PC-3 (cell line): ENCODE measurements at regions of chr7 and their contacts with region 1.

Region 1: DNA sequence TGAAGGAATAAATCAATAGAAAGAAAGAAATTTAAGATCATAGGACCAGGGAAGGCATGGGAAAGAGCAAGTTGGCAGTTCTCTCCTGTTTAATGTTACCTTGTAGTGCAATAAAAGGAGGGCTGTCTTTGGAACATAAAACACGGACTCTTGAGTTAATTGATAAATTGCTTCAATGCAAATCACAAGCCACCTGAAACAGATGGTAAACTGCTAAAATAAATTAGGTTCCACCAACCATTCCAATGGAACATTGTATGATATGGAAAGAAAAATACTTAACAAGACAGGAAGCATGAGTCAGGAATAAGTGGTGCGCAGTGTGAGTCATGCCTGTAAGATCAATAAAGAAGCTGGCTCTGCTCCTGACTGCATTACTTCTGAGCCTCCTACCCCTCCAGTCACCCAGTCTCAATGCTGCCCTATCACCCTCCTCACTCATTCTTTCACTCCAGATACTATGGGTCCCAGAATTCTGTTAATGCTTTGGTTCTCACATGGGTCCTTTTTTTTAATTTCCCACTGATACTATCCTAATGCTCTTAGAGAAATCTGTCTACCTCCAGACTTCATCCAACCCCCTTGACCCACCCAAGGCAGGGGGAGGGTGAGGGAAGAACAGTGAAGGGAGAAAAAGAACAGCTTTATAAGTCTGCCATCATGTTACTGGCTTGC is 78.9 kb downstream of the LRRC17 start:
- DNase-seq: peak; percentile 93
- ATAC-seq: peak; percentile 96
- H3K4me3 ChIP-seq: no peak overlapping the region; the same call in 1 of the 2 replicates
- H3K27ac ChIP-seq: peak overlapping the region; percentile 86
- H3K4me1 ChIP-seq: peaks cover 40% of the 10 kb centered on the region
- H3K27me3 ChIP-seq: no peaks in the 10 kb centered on the region
- CTCF ChIP-seq: no peak

Region 2: DNA sequence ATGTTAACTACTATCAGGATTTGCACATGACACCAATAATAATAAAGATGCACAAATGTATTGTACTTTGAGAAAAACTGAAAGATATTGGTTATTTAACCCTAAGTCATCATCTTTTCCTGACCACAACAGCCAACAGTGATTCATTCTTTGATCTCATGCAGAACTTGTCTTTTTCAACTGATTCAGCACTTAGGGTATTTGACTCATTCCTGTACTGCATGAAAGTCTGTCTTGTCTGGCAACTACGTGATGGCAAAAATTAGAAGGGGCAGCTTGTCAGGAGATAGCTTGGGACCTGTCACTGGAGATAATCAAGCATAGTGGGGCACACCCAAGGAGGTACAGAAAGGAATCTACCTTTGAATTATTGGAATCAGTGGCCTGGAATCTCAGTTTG is 156.7 kb before region 1 on chr7:
- CTCF ChIA-PET with region 1: no interaction called
- POLR2A ChIA-PET with region 1: no interaction called
- intact Hi-C with region 1: loop called (anchors 1 kb)
- DNase-seq: peak; percentile 81
- ATAC-seq: peak; percentile 87
- H3K4me3 ChIP-seq: peak overlapping the region; percentile 41; the same call in 1 of the 2 replicates
- H3K27ac ChIP-seq: peak overlapping the region; percentile 58
- H3K4me1 ChIP-seq: peaks cover 34% of the 10 kb centered on the region
- H3K27me3 ChIP-seq: no peaks in the 10 kb centered on the region
- CTCF ChIP-seq: no peak

Region 3: GRCh38 chr7:103148994-103149807 is 157.5 kb after region 1 on chr7 and contains the start of gene NAPEPLD:
- CTCF ChIA-PET with region 1: no interaction called
- POLR2A ChIA-PET with region 1: no interaction called
- intact Hi-C with region 1: loop called (anchors 10 kb)
- DNase-seq: peak; percentile 83
- ATAC-seq: peak; percentile 88
- H3K4me3 ChIP-seq: peak within 1 kb of the TSS; percentile 86
- H3K27ac ChIP-seq: peak within 1 kb of the TSS; percentile 85
- H3K4me1 ChIP-seq: peaks cover 24% of the 10 kb centered on the region
- H3K27me3 ChIP-seq: no peaks in the 10 kb centered on the region
- CTCF ChIP-seq: no peak
- total RNA-seq, gene NAPEPLD: 2.5 and 3.9 TPM in 2 replicates